Caco-2 (cell line): ENCODE measurements at regions of chr9 and their contacts with region 1.

Region 1: GRCh38 chr9:110131444-110131881 is 76.5 kb downstream of the C9orf152 start:
- DNase-seq: peak; percentile 86 to 91
- H3K4me3 ChIP-seq: no peak overlapping the region
- H3K4me3 Mint-ChIP-seq: peak overlapping the region; percentile 90
- H3K27ac Mint-ChIP-seq: peak overlapping the region; percentile 97
- H3K4me1 ChIP-seq: peaks cover 45% of the 10 kb centered on the region
- H3K4me1 Mint-ChIP-seq: peaks cover 35% of the 10 kb centered on the region
- H3K27me3 ChIP-seq: no peaks in the 10 kb centered on the region
- H3K27me3 Mint-ChIP-seq: no peaks in the 10 kb centered on the region
- CTCF ChIP-seq: no peak

Region 2: DNA sequence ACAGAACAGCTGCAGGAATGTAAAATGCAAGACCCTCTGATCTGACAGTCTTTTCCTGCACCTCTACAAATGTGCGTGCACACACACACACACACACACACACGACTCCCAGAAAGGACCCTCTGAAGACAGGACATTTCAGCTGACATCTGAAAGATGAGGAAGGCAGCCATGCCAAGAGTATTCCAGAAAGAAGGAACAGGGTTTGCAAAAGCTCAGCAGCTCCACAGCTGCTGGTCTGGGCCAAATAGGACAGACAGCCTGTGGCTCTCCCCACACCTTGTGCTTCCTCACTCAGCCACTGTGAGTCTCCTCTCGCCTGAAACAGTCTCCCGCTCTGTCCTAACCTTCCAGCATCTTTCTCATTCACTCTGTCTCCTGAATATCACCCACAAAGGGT is 162.5 kb before region 1 on chr9:
- CTCF ChIA-PET with region 1: interaction called, 3 read pairs
- POLR2A ChIA-PET with region 1: interaction called, 4 read pairs
- intact Hi-C with region 1: loop called (anchors 2 kb)
- DNase-seq: peak; percentile 54 to 58
- H3K4me3 ChIP-seq: no peak overlapping the region
- H3K4me3 Mint-ChIP-seq: no peak overlapping the region
- H3K27ac Mint-ChIP-seq: no peak overlapping the region
- H3K4me1 ChIP-seq: no peaks in the 10 kb centered on the region
- H3K4me1 Mint-ChIP-seq: no peaks in the 10 kb centered on the region
- H3K27me3 ChIP-seq: no peaks in the 10 kb centered on the region
- H3K27me3 Mint-ChIP-seq: no peaks in the 10 kb centered on the region
- CTCF ChIP-seq: peak in 1 of 2 experiments; percentile 37

Region 3: DNA sequence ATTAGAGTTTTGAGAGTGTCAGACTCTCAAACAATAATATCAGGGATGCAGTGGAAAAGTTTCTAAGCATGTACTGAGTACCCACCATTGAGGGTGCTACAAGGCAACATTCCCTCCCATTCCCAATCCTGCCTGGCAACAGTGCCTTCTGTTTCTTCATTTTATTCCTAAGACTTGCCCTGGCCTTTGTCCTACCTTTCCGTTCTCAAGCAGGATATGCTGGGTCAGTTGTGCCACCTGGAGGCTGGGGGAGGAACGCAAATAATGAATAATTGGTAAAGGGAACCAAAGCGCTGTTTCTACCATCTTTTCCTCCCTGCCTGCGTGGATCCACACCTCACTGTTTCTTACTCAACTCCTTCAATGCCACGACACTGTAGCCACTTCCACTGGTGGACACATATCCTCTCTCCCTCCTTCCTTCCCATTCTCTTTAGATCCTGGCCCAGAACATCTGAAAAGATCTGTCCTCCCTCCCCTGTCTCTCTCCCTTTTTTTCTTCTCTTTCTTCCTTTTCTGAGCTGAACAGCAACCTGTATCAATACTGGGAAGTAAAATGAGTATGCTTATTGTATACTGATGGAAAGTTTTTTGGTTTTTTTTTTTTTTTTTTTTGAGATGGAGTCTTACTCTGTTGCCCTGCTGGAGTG is 73.0 kb before region 1 on chr9:
- CTCF ChIA-PET with region 1: no interaction called
- POLR2A ChIA-PET with region 1: no interaction called
- intact Hi-C with region 1: loop called (anchors 2 kb)
- DNase-seq: peak; percentile 78 to 79
- H3K4me3 ChIP-seq: no peak overlapping the region
- H3K4me3 Mint-ChIP-seq: no peak overlapping the region
- H3K27ac Mint-ChIP-seq: no peak overlapping the region
- H3K4me1 ChIP-seq: peaks cover 12% of the 10 kb centered on the region; the same call in 1 of the 2 replicates
- H3K4me1 Mint-ChIP-seq: peaks cover 18% of the 10 kb centered on the region
- H3K27me3 ChIP-seq: no peaks in the 10 kb centered on the region
- H3K27me3 Mint-ChIP-seq: no peaks in the 10 kb centered on the region
- CTCF ChIP-seq: peak; percentile 68 to 69

Region 4: DNA sequence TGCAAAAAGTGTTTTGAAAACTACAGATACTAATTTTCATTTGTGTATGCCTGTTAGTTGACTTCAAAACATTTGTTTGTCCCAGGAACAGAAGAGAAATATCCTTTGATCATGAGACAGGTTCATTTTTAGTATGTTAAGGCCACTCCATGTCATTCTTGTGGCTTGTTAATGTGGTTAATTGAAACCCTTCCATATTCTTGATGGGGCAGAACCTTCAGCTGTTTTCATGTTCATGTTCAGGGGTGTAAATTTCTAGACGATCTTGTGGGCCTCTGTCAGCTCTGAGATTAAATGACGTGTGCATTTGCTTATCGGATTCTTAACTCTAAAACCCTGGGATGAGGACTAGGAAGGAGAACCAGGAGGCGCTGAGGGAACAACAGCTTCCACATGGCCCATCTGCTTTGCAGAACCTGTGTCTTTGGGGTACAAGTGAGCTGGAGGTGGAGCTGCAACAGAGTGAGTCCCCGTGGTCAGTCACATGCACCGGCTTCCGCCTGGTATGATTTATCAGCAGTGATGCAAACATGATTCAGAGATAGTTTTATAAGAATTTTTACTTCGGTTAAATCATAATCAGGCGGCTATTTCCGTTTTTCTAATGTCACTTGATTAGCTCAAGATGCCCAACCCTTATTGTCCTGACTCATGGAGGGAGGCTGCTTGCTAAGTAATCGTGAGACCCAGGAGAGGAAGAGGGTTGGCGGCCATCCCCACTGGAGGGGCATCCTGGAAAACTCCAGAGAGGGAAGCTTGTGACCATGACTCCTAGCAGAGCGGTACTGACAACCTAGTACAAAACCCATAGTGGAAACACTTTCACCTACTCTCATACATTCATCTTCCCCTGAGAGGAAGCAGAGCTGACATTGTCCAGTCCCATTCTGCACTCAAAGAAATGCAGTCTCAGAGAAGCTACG is 61.9 kb before region 1 on chr9:
- CTCF ChIA-PET with region 1: interaction called, 3 read pairs
- POLR2A ChIA-PET with region 1: interaction called, 10 read pairs
- intact Hi-C with region 1: loop called (anchors 1 kb)
- DNase-seq: no peak
- H3K4me3 ChIP-seq: no peak overlapping the region
- H3K4me3 Mint-ChIP-seq: no peak overlapping the region
- H3K27ac Mint-ChIP-seq: no peak overlapping the region
- H3K4me1 ChIP-seq: peaks cover 29% of the 10 kb centered on the region
- H3K4me1 Mint-ChIP-seq: peaks cover 30% of the 10 kb centered on the region
- H3K27me3 ChIP-seq: no peaks in the 10 kb centered on the region
- H3K27me3 Mint-ChIP-seq: no peaks in the 10 kb centered on the region
- CTCF ChIP-seq: no peak

Region 5: GRCh38 chr9:110088099-110088498 is 43.4 kb before region 1 on chr9:
- CTCF ChIA-PET with region 1: no interaction called
- POLR2A ChIA-PET with region 1: interaction called, 16 read pairs
- intact Hi-C with region 1: loop called (anchors 1 kb)
- DNase-seq: peak; percentile 13 to 62
- H3K4me3 ChIP-seq: no peak overlapping the region
- H3K4me3 Mint-ChIP-seq: no peak overlapping the region
- H3K27ac Mint-ChIP-seq: peak overlapping the region; percentile 14
- H3K4me1 ChIP-seq: peaks cover 43% of the 10 kb centered on the region
- H3K4me1 Mint-ChIP-seq: peaks cover 38% of the 10 kb centered on the region
- H3K27me3 ChIP-seq: no peaks in the 10 kb centered on the region
- H3K27me3 Mint-ChIP-seq: no peaks in the 10 kb centered on the region
- CTCF ChIP-seq: no peak

Region 6: GRCh38 chr9:110105107-110105506 is 26.4 kb before region 1 on chr9:
- CTCF ChIA-PET with region 1: no interaction called
- POLR2A ChIA-PET with region 1: interaction called, 81 read pairs
- intact Hi-C with region 1: loop called (anchors 1 kb)
- DNase-seq: no peak
- H3K4me3 ChIP-seq: no peak overlapping the region
- H3K4me3 Mint-ChIP-seq: no peak overlapping the region
- H3K27ac Mint-ChIP-seq: peak overlapping the region; percentile 89
- H3K4me1 ChIP-seq: peaks cover 75% of the 10 kb centered on the region
- H3K4me1 Mint-ChIP-seq: peaks cover 41% of the 10 kb centered on the region
- H3K27me3 ChIP-seq: no peaks in the 10 kb centered on the region
- H3K27me3 Mint-ChIP-seq: no peaks in the 10 kb centered on the region
- CTCF ChIP-seq: no peak

Region 7: DNA sequence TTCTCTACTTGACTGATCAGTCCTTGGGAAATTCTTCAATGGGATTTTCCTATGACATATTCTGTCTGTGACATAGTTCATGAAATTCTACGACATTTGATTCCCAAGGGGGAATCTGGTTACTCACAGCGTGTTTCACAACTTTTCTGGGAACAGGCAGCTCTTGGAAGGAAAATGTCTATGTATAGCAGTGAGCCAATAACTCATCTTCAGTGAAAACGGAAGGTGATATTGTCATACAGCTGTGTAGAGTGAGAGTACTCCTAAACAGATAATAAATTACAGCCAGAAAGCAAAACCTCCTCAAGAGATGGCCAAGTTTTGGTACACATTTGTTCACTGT is 14.9 kb before region 1 on chr9:
- CTCF ChIA-PET with region 1: interaction called, 3 read pairs
- POLR2A ChIA-PET with region 1: interaction called, 11 read pairs
- intact Hi-C with region 1: loop called (anchors 1 kb)
- DNase-seq: no peak
- H3K4me3 ChIP-seq: no peak overlapping the region
- H3K4me3 Mint-ChIP-seq: no peak overlapping the region
- H3K27ac Mint-ChIP-seq: peak overlapping the region; percentile 82
- H3K4me1 ChIP-seq: peaks cover 75% of the 10 kb centered on the region
- H3K4me1 Mint-ChIP-seq: peaks cover 59% of the 10 kb centered on the region
- H3K27me3 ChIP-seq: no peaks in the 10 kb centered on the region
- H3K27me3 Mint-ChIP-seq: no peaks in the 10 kb centered on the region
- CTCF ChIP-seq: no peak

Region 8: GRCh38 chr9:110443146-110443865 is 311.8 kb after region 1 on chr9:
- CTCF ChIA-PET with region 1: no interaction called
- POLR2A ChIA-PET with region 1: no interaction called
- intact Hi-C with region 1: no loop called
- DNase-seq: no peak
- H3K4me3 ChIP-seq: no peak overlapping the region
- H3K4me3 Mint-ChIP-seq: no peak overlapping the region
- H3K27ac Mint-ChIP-seq: no peak overlapping the region
- H3K4me1 ChIP-seq: no peaks in the 10 kb centered on the region
- H3K4me1 Mint-ChIP-seq: no peaks in the 10 kb centered on the region
- H3K27me3 ChIP-seq: no peaks in the 10 kb centered on the region
- H3K27me3 Mint-ChIP-seq: peaks cover 5% of the 10 kb centered on the region
- CTCF ChIP-seq: no peak